Aorta (tissue), 5 donors: ENCODE measurements at regions of chr1 and their contacts with region 1.

Region 1: DNA sequence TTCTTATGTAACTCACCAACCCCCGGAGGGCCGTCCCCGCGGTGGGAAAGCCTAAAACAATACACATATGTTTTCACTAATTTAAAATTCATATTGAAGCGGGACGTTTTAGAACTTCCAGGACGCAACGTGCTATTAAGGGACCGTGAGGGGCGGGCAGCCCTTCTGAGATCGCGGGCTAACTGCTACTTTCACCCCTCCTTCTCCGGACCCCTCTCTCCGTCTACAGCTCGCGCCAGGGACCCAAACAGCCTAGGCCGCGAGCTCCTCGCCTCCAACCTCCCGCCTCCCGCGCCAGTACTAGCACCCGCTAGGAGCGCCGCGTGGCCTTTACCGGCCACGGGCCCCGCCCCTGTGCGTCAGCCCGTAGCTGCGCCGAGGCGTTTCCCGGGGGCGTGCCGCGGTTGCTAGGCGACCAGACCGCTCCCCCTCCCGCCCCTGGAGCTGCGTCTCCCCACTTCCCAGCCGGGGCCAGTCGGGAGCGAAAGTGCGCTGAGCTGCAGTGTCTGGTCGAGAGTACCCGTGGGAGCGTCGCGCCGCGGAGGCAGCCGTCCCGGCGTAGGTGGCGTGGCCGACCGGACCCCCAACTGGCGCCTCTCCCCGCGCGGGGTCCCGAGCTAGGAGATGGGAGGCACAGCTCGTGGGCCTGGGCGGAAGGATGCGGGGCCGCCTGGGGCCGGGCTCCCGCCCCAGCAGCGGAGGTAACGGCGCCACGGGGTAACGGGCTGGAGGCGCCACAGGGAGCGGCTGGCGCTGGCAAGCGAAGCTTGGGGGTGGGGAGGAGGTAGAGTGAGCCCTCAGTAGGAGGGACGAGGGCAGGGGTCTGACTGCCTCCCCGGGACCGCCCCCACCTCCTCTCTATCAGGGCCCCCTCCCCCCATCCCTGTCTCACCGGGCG is at the start of gene DYRK3:
- DNase-seq: peak; percentile 96 to 99
- ATAC-seq: peak; percentile 97
- H3K4me3 ChIP-seq: peak within 1 kb of the TSS; percentile 56 to 79
- H3K27ac ChIP-seq: peak within 1 kb of the TSS in 1 of 2 donors; percentile 15
- H3K4me1 ChIP-seq: peaks cover 0 to 4% of the 10 kb centered on the region in 2 donors
- H3K27me3 ChIP-seq: no peaks in the 10 kb centered on the region
- total RNA-seq, gene DYRK3: 8.2 to 10.7 TPM

Region 2: GRCh38 chr1:206663832-206664652 is 28.7 kb after region 1 on chr1:
- intact Hi-C with region 1: loop called (anchors 2 kb)
- DNase-seq: peak in 1 of 2 donors; percentile 57
- ATAC-seq: peak; percentile 87
- H3K4me3 ChIP-seq: no peak overlapping the region
- H3K27ac ChIP-seq: no peak overlapping the region
- H3K4me1 ChIP-seq: no peaks in the 10 kb centered on the region
- H3K27me3 ChIP-seq: no peaks in the 10 kb centered on the region

Region 3: DNA sequence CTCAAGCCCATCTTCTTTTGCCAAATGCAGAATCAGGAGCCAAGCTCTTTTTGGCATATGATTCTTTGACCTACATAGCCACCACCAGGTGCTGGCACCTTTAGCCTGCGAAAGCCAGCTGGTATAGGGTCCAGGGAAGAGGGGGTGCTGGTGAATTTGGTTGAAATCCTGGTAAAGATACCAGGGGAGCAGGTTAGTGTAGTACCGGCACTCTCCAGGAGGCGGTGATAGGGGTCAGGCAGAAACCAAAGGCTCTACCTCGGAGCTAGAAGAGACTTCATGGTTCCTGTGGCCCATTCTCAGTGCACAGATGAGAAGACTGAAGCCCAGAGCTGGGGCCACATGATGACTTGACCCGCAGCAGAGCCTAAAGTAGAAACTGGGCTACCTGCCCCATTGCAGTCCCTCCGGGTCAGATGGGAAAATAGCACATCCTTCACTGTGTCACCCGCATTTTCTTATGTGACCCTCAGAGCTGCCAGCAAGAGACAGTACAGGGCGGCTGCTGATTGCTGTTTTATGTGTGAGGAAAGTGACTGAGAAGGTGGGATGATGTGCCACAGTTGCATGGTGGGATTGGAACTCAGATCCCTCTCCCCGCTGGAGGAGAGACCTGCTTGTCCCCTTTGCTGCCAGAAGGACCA is 99.3 kb after region 1 on chr1:
- intact Hi-C with region 1: loop called in 1 of 2 experiments (anchors 5 kb)
- DNase-seq: peak; percentile 60 to 83
- ATAC-seq: peak; percentile 60
- H3K4me3 ChIP-seq: no peak overlapping the region
- H3K27ac ChIP-seq: no peak overlapping the region
- H3K4me1 ChIP-seq: no peaks in the 10 kb centered on the region
- H3K27me3 ChIP-seq: no peaks in the 10 kb centered on the region

Region 4: DNA sequence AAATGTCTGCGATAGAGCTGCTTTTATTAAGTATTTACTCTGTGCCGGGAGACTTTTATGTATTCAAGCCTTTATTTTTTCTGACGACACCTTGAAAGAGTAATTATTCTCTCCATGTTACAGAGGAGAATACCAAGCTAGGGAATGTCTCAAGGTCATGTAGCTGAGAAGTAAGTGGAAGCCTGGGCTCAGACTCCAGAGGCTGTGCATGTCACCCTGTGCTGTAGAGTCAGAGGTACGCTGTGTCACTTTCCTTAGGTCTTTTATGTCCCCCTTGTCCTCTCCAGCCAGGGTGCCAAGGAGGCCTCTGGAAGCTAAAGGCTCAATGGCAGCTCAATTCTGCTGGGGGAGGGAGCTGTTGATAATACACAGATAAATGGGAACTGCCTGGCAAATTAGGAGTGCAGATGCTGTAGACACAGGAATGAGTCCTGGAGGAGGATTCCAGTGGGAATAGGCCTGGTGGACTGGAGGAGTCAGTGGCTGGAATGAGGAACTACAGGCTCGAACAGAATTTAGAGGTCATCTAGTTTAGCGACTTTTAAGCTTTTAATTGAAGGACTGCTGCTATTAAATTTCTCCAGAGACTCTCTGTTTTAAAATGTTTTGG is 125.9 kb after region 1 on chr1:
- intact Hi-C with region 1: no loop called
- DNase-seq: no peak
- ATAC-seq: no peak
- H3K4me3 ChIP-seq: no peak overlapping the region
- H3K27ac ChIP-seq: no peak overlapping the region
- H3K4me1 ChIP-seq: no peaks in the 10 kb centered on the region
- H3K27me3 ChIP-seq: peaks cover 0 to 3% of the 10 kb centered on the region in 2 donors

Region 5: GRCh38 chr1:206808615-206809014 is 173.3 kb after region 1 on chr1:
- intact Hi-C with region 1: loop called in 1 of 2 experiments (anchors 5 kb)
- DNase-seq: no peak
- ATAC-seq: no peak
- H3K4me3 ChIP-seq: no peak overlapping the region
- H3K27ac ChIP-seq: no peak overlapping the region
- H3K4me1 ChIP-seq: no peaks in the 10 kb centered on the region
- H3K27me3 ChIP-seq: peaks cover 0 to 2% of the 10 kb centered on the region in 2 donors